CD4-positive, alpha-beta memory T cell (primary cell): ENCODE measurements at regions of chr11 and their contacts with region 1.

Region 1: DNA sequence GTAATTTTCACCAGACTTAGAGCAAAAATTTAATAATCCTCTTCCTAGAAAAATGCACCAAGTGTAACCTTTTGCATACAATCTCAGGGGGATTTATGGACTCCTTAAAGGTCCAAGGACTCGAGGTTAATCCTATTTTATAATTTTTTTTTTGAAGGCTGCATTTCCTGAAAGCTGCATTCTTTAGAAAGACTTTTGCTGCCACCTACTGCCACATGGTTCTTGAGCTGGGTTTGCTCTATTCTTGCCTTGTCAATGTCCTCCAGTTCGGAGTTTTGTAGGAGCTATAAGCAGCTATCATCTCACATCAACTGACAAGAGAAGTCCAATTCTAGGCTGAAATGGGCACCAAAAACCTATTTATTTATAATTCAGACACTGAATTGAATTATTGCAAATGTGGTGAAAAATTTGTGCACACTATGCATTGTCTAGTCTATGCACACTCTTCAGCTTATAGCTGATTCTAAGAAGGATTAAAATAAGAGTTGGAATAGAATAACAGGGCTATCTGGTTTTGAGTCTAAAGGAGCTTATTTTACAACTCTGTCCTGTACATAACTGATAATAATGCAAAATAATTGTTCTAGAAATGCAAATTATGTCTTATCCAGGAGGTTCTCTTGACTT is 31.3 kb downstream of the TRAF6 start:
- DNase-seq: peak in 4 of 5 donors; percentile 34 to 43 (median 40)
- H3K4me3 ChIP-seq: no peak overlapping the region
- H3K4me3 Mint-ChIP-seq: no peak overlapping the region
- H3K27ac ChIP-seq: no peak overlapping the region
- H3K27ac Mint-ChIP-seq: peak overlapping the region in 1 of 7 donors; percentile 10
- H3K4me1 ChIP-seq: no peaks in the 10 kb centered on the region
- H3K4me1 Mint-ChIP-seq: peaks cover 3 to 8% (median 6%) of the 10 kb centered on the region in 4 donors
- H3K27me3 ChIP-seq: no peaks in the 10 kb centered on the region
- H3K27me3 Mint-ChIP-seq: no peaks in the 10 kb centered on the region

Region 2: GRCh38 chr11:34855021-34855753 is 1623.6 kb before region 1 on chr11:
- CTCF ChIA-PET with region 1: no interaction called
- POLR2A ChIA-PET with region 1: no interaction called
- intact Hi-C with region 1: no loop called
- DNase-seq: no peak
- H3K4me3 ChIP-seq: no peak overlapping the region
- H3K4me3 Mint-ChIP-seq: no peak overlapping the region
- H3K27ac ChIP-seq: no peak overlapping the region
- H3K27ac Mint-ChIP-seq: no peak overlapping the region
- H3K4me1 ChIP-seq: no peaks in the 10 kb centered on the region
- H3K4me1 Mint-ChIP-seq: no peaks in the 10 kb centered on the region
- H3K27me3 ChIP-seq: no peaks in the 10 kb centered on the region
- H3K27me3 Mint-ChIP-seq: no peaks in the 10 kb centered on the region

Region 3: DNA sequence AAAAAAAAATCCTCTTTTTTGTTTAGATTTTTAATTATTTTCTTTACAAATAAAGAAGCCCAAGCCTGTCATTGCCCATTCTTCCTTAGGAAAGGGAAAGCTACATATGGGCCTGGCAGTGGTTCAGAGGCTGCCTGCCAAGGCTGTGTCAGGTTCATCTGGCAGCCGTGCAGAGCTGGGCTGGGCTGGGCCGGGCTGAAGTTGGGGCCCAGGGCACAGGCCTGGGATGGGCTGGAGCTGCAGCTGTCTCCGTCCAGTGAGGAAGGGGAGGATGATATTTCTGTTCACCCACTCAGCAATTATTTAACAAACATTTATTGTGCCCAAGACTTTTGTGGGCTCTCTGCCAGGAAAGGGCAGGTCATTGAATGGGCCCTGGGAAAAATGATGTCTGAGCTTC is 178.2 kb before region 1 on chr11:
- CTCF ChIA-PET with region 1: interaction called, 139 read pairs
- POLR2A ChIA-PET with region 1: no interaction called
- intact Hi-C with region 1: no loop called
- DNase-seq: no peak
- H3K4me3 ChIP-seq: no peak overlapping the region
- H3K4me3 Mint-ChIP-seq: no peak overlapping the region
- H3K27ac ChIP-seq: no peak overlapping the region
- H3K27ac Mint-ChIP-seq: no peak overlapping the region
- H3K4me1 ChIP-seq: no peaks in the 10 kb centered on the region
- H3K4me1 Mint-ChIP-seq: no peaks in the 10 kb centered on the region
- H3K27me3 ChIP-seq: no peaks in the 10 kb centered on the region
- H3K27me3 Mint-ChIP-seq: peaks cover 0 to 12% of the 10 kb centered on the region in 2 donors

Region 4: DNA sequence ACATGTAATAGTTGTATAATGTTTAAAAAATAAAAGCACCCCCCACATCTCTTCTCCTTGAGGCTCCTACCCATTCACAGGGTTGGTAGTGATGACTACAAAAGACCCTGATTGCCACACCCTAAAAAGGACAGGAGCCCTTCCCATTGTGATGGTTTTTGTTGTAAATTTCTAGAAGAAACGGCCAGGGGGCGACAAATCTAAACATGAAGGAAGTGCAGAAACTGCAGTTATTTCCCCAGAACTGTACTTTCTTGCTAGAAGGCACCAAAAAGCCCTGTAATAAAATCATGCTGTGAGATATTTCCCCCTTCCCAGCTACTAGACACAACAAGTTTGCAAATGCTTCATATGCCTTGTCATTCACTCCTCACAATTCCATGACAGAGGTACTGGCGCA is 171.9 kb before region 1 on chr11:
- CTCF ChIA-PET with region 1: interaction called, 28 read pairs
- POLR2A ChIA-PET with region 1: interaction called, 3 read pairs
- intact Hi-C with region 1: loop called (anchors 1 kb)
- DNase-seq: peak in 2 of 5 donors; percentile 15 to 21
- H3K4me3 ChIP-seq: no peak overlapping the region
- H3K4me3 Mint-ChIP-seq: peak overlapping the region in 1 of 8 donors; percentile 49
- H3K27ac ChIP-seq: no peak overlapping the region
- H3K27ac Mint-ChIP-seq: peak overlapping the region in 1 of 7 donors; percentile 38
- H3K4me1 ChIP-seq: no peaks in the 10 kb centered on the region
- H3K4me1 Mint-ChIP-seq: peaks cover 0 to 10% (median 4%) of the 10 kb centered on the region in 4 donors
- H3K27me3 ChIP-seq: no peaks in the 10 kb centered on the region
- H3K27me3 Mint-ChIP-seq: peaks cover 3 to 12% of the 10 kb centered on the region in 2 donors

Region 5: GRCh38 chr11:36450110-36450572 is 28.7 kb before region 1 on chr11:
- CTCF ChIA-PET with region 1: interaction called, 21 read pairs
- POLR2A ChIA-PET with region 1: interaction called, 4 read pairs
- intact Hi-C with region 1: no loop called
- DNase-seq: peak in 1 of 5 donors; percentile 10
- H3K4me3 ChIP-seq: no peak overlapping the region
- H3K4me3 Mint-ChIP-seq: peak overlapping the region; percentile 24 to 83 (median 65)
- H3K27ac ChIP-seq: no peak overlapping the region
- H3K27ac Mint-ChIP-seq: peak overlapping the region; percentile 28 to 89 (median 76)
- H3K4me1 ChIP-seq: peaks cover 54% of the 10 kb centered on the region
- H3K4me1 Mint-ChIP-seq: peaks cover 45 to 68% (median 56%) of the 10 kb centered on the region in 4 donors
- H3K27me3 ChIP-seq: no peaks in the 10 kb centered on the region
- H3K27me3 Mint-ChIP-seq: no peaks in the 10 kb centered on the region